ENCODE measurements at regions of chr1 and their contacts with region 1.

Region 1: DNA sequence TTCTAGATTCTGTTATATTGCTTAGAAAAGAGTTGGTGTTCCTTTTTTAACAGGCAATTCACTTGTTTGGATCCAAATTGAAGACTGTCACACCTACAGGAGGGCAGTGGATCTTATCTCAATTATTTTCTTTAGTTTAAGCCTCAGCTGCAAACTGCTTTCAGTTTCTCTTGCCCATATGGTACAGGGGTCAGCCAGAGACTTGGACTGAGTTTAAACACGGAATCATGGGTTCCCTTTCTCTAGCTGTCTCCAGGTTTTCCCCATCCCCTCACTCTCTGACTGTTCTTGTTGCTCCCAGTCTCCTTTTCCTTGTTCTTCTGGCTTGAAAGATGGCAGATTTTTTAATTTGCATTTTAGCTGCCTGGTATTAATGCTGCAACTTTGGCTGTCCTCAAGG is 18.4 kb downstream of the DTL start:
- DNase-seq: no peak
- ATAC-seq: no peak
- H3K4me3 ChIP-seq: no peak overlapping the region
- H3K27ac ChIP-seq: no peak overlapping the region
- H3K4me1 ChIP-seq: no peaks in the 10 kb centered on the region
- H3K27me3 ChIP-seq: no peaks in the 10 kb centered on the region
- CTCF ChIP-seq: no peak

Region 2: GRCh38 chr1:213268221-213268620 is 1214.2 kb after region 1 on chr1:
- intact Hi-C with region 1: loop called in 1 of 2 experiments (anchors 5 kb)
- DNase-seq: no peak
- ATAC-seq: no peak
- H3K4me3 ChIP-seq: no peak overlapping the region
- H3K27ac ChIP-seq: no peak overlapping the region
- H3K4me1 ChIP-seq: no peaks in the 10 kb centered on the region
- H3K27me3 ChIP-seq: no peaks in the 10 kb centered on the region
- CTCF ChIP-seq: no peak